Heart left ventricle (tissue), 16 donors: ENCODE measurements at regions of chr12 and their contacts with region 1.

Region 1: GRCh38 chr12:3117628-3118027 is 40.4 kb downstream of the TSPAN9 start:
- DNase-seq: peak in 1 of 5 donors; percentile 20
- ATAC-seq: no peak
- H3K4me3 ChIP-seq: peak overlapping the region in 2 of 12 donors; percentile 7 to 10
- H3K27ac ChIP-seq: peak overlapping the region in 11 of 12 donors; percentile 53 to 92 (median 73)
- H3K4me1 ChIP-seq: peaks cover 21 to 63% (median 55%) of the 10 kb centered on the region in 12 donors
- H3K27me3 ChIP-seq: no peaks in the 10 kb centered on the region
- CTCF ChIP-seq: no peak
- POLR2A ChIP-seq: no peak

Region 2: GRCh38 chr12:3107071-3107583 is 10.5 kb before region 1 on chr12:
- intact Hi-C with region 1: loop called in 1 of 10 experiments (anchors 1 kb)
- DNase-seq: no peak
- ATAC-seq: no peak
- H3K4me3 ChIP-seq: no peak overlapping the region
- H3K27ac ChIP-seq: peak overlapping the region in 7 of 12 donors; percentile 7 to 58 (median 35)
- H3K4me1 ChIP-seq: peaks cover 18 to 68% (median 51%) of the 10 kb centered on the region in 12 donors
- H3K27me3 ChIP-seq: no peaks in the 10 kb centered on the region
- CTCF ChIP-seq: no peak
- POLR2A ChIP-seq: no peak

Region 3: GRCh38 chr12:3168223-3169221 is 50.9 kb after region 1 on chr12:
- intact Hi-C with region 1: no loop called
- DNase-seq: no peak
- ATAC-seq: peak in 3 of 4 donors; percentile 6 to 61 (median 19)
- H3K4me3 ChIP-seq: no peak overlapping the region
- H3K27ac ChIP-seq: no peak overlapping the region
- H3K4me1 ChIP-seq: peaks cover 0 to 48% (median 16%) of the 10 kb centered on the region in 12 donors
- H3K27me3 ChIP-seq: no peaks in the 10 kb centered on the region
- CTCF ChIP-seq: no peak
- POLR2A ChIP-seq: no peak

Region 4: GRCh38 chr12:3973978-3974644 is 856.5 kb after region 1 on chr12:
- intact Hi-C with region 1: no loop called
- DNase-seq: peak in 1 of 5 donors; percentile 36
- ATAC-seq: no peak
- H3K4me3 ChIP-seq: no peak overlapping the region
- H3K27ac ChIP-seq: peak overlapping the region in 1 of 12 donors; percentile 53
- H3K4me1 ChIP-seq: peaks cover 0 to 32% (median 0%) of the 10 kb centered on the region in 12 donors
- H3K27me3 ChIP-seq: no peaks in the 10 kb centered on the region
- CTCF ChIP-seq: no peak
- POLR2A ChIP-seq: no peak